AG04449 (cell line): ENCODE measurements at regions of chr14 and their contacts with region 1.

Region 1: GRCh38 chr14:54773171-54773975 is 129.3 kb downstream of the GCH1 start:
- DNase-seq: peak; percentile 99
- H3K4me3 ChIP-seq: peak overlapping the region; percentile 19
- CTCF ChIP-seq: peak; percentile 73

Region 2: GRCh38 chr14:54366736-54367735 is 406.3 kb before region 1 on chr14:
- CTCF ChIA-PET with region 1: interaction called, 15 read pairs
- POLR2A ChIA-PET with region 1: no interaction called
- DNase-seq: peak; percentile 38
- H3K4me3 ChIP-seq: no peak overlapping the region; the same call in 1 of the 2 replicates
- CTCF ChIP-seq: peak; percentile 83

Region 3: GRCh38 chr14:54509546-54510501 is 263.5 kb before region 1 on chr14 and contains the start of gene CGRRF1:
- CTCF ChIA-PET with region 1: interaction called, 22 read pairs
- POLR2A ChIA-PET with region 1: interaction called, 3 read pairs
- DNase-seq: peak; percentile 89
- H3K4me3 ChIP-seq: peak within 1 kb of the TSS; percentile 98
- CTCF ChIP-seq: peak; percentile 77

Region 4: GRCh38 chr14:54577977-54578376 is 195.4 kb before region 1 on chr14:
- CTCF ChIA-PET with region 1: interaction called, 10 read pairs
- POLR2A ChIA-PET with region 1: no interaction called
- DNase-seq: no peak
- H3K4me3 ChIP-seq: no peak overlapping the region
- CTCF ChIP-seq: no peak

Region 5: GRCh38 chr14:54683882-54684794 is 89.2 kb before region 1 on chr14:
- CTCF ChIA-PET with region 1: interaction called, 35 read pairs
- POLR2A ChIA-PET with region 1: no interaction called
- DNase-seq: no peak
- H3K4me3 ChIP-seq: peak overlapping the region; percentile 23
- CTCF ChIP-seq: no peak

Region 6: DNA sequence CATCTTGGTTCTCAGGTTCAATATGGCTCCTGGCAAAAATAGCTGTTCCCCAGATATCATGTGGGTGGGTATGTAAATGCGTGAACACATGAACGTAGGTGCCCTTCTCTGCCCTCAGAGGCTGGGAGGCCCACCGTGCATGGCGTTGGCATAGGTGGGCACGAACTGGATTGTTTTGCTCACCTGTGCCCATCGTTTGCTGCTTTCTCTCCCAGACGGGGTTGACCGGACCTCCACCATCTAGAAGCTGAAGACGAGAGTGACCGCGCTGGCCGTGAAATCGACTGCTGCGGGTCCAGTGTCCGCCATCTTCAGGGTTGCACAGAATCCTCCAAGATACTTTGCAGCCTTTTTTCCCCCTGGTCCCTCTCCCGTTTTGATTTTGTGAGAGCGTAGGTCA is 15.3 kb after region 1 on chr14:
- CTCF ChIA-PET with region 1: interaction called, 54 read pairs
- POLR2A ChIA-PET with region 1: no interaction called
- DNase-seq: no peak
- H3K4me3 ChIP-seq: no peak overlapping the region
- CTCF ChIP-seq: no peak